Tibial artery (tissue), 4 donors: ENCODE measurements at regions of chr2 and their contacts with region 1.

Region 1: GRCh38 chr2:27217217-27218121 is at the start of gene CAD:
- DNase-seq: peak; percentile 86 to 93
- H3K4me3 ChIP-seq: peak within 1 kb of the TSS; percentile 64 to 65
- H3K27ac ChIP-seq: peak within 1 kb of the TSS; percentile 56 to 76
- H3K4me1 ChIP-seq: peaks cover 0 to 22% (median 15%) of the 10 kb centered on the region in 4 donors
- H3K27me3 ChIP-seq: no peaks in the 10 kb centered on the region
- CTCF ChIP-seq: peak; percentile 36 to 47

Region 2: GRCh38 chr2:27032495-27033252 is 184.8 kb before region 1 on chr2 and contains the start of gene TMEM214:
- intact Hi-C with region 1: loop called (anchors 10 kb)
- DNase-seq: peak; percentile 91 to 93
- H3K4me3 ChIP-seq: peak within 1 kb of the TSS; percentile 96 to 98
- H3K27ac ChIP-seq: peak within 1 kb of the TSS; percentile 91
- H3K4me1 ChIP-seq: peaks cover 0 to 22% (median 16%) of the 10 kb centered on the region in 4 donors
- H3K27me3 ChIP-seq: no peaks in the 10 kb centered on the region
- CTCF ChIP-seq: peak; percentile 6 to 24

Region 3: GRCh38 chr2:27133905-27134780 is 83.3 kb before region 1 on chr2 and contains the start of gene PREB:
- intact Hi-C with region 1: loop called (anchors 10 kb)
- DNase-seq: peak; percentile 93 to 97
- H3K4me3 ChIP-seq: peak within 1 kb of the TSS; percentile 68 to 80
- H3K27ac ChIP-seq: peak within 1 kb of the TSS; percentile 83 to 90
- H3K4me1 ChIP-seq: peaks cover 0 to 21% (median 19%) of the 10 kb centered on the region in 4 donors
- H3K27me3 ChIP-seq: no peaks in the 10 kb centered on the region
- CTCF ChIP-seq: peak in 1 of 2 experiments; percentile 7